WTC11 (cell line): ENCODE measurements at regions of chr7 and their contacts with region 1.

Region 1: GRCh38 chr7:65915921-65916657 is 43.2 kb downstream of the VKORC1L1 start:
- DNase-seq: no peak
- ATAC-seq: no peak
- H3K4me3 Mint-ChIP-seq: no peak overlapping the region
- H3K27ac Mint-ChIP-seq: no peak overlapping the region
- H3K4me1 Mint-ChIP-seq: no peaks in the 10 kb centered on the region
- H3K27me3 Mint-ChIP-seq: no peaks in the 10 kb centered on the region
- CTCF ChIP-seq: no peak

Region 2: GRCh38 chr7:65872776-65873581 is 43.1 kb before region 1 on chr7 and contains the start of gene VKORC1L1:
- CTCF ChIA-PET with region 1: no interaction called
- POLR2A ChIA-PET with region 1: no interaction called
- DNase-seq: peak; percentile 94
- ATAC-seq: peak; percentile 93
- H3K4me3 Mint-ChIP-seq: peak within 1 kb of the TSS; percentile 88
- H3K27ac Mint-ChIP-seq: peak within 1 kb of the TSS; percentile 91; the same call in 1 of the 2 replicates
- H3K4me1 Mint-ChIP-seq: peaks cover 9% of the 10 kb centered on the region; the same call in 1 of the 2 replicates
- H3K27me3 Mint-ChIP-seq: no peaks in the 10 kb centered on the region; the same call in 1 of the 2 replicates
- CTCF ChIP-seq: no peak
- total RNA-seq, gene VKORC1L1: 28.3 to 30.2 TPM (median 28.5 TPM) in 3 replicates

Region 3: GRCh38 chr7:65927489-65928448 is 11.7 kb after region 1 on chr7:
- CTCF ChIA-PET with region 1: no interaction called
- POLR2A ChIA-PET with region 1: interaction called, 12 read pairs
- DNase-seq: no peak
- ATAC-seq: peak; percentile 65
- H3K4me3 Mint-ChIP-seq: no peak overlapping the region
- H3K27ac Mint-ChIP-seq: no peak overlapping the region; the same call in 1 of the 2 replicates
- H3K4me1 Mint-ChIP-seq: peaks cover 8% of the 10 kb centered on the region
- H3K27me3 Mint-ChIP-seq: no peaks in the 10 kb centered on the region
- CTCF ChIP-seq: no peak

Region 4: DNA sequence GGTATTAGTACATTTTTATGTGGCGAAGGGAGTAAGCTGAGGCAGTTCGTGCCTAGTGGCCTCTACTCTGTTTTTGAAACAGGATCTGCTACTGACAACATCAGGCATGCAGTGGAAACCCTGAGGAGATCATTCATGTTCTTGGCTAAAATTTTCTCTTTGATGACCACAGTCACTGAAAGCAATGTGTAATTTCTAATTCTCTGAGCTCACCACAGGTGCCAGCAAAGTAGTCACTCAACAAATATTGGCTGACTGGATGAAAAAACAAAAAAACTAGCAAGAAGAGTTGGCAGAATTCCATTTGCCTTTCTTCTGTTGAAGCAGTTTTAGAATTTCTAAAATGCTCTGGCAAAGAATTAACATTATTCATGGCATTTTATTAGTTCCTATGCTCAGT is 536.1 kb after region 1 on chr7:
- CTCF ChIA-PET with region 1: no interaction called
- POLR2A ChIA-PET with region 1: no interaction called
- DNase-seq: no peak
- ATAC-seq: no peak
- H3K4me3 Mint-ChIP-seq: no peak overlapping the region
- H3K27ac Mint-ChIP-seq: no peak overlapping the region
- H3K4me1 Mint-ChIP-seq: no peaks in the 10 kb centered on the region
- H3K27me3 Mint-ChIP-seq: no peaks in the 10 kb centered on the region
- CTCF ChIP-seq: no peak